ENCODE measurements at regions of chr5 and their contacts with region 1.

Region 1: DNA sequence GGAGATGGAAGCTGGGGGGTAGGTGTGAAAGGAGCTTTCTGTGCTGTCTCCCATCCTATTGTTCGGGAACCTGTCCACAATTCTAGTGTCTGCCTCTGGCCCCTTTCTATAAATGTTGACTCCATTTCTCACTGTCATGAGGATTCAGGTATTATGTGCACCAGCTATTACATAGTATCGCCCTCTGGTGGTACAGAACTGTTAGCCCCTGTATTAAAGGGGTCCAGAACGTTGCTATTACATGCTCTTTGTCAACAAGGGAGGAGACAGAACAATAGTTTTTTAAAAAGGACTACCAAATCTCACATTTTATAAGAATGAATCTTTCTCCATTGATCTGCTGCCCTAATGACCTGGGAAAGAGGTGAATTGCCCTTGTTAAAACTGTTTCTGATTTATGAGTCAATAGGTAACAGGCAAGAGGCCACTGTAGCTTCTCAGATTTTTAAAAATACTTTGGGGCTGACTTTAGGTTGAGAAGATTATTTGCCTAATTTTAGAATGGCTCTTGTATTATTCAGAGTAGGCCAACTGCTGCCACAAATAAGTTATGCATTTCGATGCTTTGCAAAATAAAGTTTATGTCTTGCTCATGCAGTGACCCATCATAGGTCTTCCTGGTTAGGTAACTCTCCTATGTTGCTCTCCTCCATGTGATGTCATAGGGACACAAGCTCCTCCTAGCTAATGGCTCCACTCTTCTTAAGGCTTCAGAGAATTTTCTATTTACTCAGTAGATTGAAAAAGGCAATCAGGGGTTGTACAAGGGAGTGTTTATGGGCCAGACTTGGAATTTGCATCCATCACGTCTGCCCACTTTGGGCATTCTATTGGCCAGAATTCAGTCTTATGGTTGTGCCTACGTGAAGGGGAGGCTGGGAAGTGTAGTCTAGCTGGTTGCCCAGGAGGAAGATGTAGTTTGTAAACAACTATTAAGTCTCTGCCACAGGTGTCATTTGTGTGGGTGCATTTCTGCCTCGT is 20.8 kb downstream of the DCANP1 start:
- DNase-seq: peak; percentile 67
- CTCF ChIP-seq: peak; percentile 83

Region 2: GRCh38 chr5:135214897-135215616 is 211.3 kb before region 1 on chr5:
- CTCF ChIA-PET with region 1: no interaction called
- POLR2A ChIA-PET with region 1: no interaction called
- DNase-seq: no peak
- CTCF ChIP-seq: no peak

Region 3: DNA sequence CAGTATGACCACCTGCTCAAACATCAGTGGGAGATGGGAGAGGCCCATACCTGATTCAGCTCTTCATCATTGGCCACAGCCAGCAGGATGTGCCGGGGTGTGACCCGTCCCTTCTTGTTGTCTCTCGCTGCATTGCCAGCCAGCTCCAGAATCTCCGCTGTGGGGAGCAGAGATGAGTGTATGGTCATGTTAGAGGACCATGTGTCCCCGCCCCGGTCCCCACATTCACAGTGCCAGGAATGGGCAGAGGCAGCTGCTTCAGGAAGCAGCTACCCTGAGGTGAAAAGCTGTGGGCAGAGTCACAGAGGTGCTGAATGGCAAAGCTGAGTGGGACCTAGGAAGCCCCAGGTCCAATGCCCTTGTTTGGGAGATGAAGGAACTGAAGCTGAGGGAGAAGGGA is 56.4 kb before region 1 on chr5:
- CTCF ChIA-PET with region 1: interaction called, 10 read pairs
- POLR2A ChIA-PET with region 1: no interaction called
- DNase-seq: no peak
- CTCF ChIP-seq: no peak

Region 4: DNA sequence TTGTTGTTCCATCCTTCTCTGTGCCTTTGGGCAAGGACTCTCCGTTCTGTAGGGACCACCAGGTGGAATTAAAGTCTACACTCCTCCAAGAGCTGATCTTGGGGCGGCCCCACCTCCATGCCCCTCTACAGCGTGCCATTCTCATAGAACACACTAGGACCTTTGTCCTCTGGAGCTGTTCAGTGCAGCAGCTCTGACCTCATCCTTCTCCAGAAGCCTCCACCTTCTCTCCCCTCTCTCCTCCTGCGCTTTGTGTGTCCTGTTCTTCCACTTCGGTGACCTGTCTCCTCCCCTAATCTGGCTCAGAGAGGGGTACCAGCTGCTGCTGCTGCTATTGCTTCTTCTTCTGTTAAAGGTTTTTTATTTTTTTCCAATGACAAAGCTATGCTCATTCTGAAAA is 25.5 kb before region 1 on chr5:
- CTCF ChIA-PET with region 1: interaction called, 27 read pairs
- POLR2A ChIA-PET with region 1: no interaction called
- DNase-seq: no peak
- CTCF ChIP-seq: no peak

Region 5: DNA sequence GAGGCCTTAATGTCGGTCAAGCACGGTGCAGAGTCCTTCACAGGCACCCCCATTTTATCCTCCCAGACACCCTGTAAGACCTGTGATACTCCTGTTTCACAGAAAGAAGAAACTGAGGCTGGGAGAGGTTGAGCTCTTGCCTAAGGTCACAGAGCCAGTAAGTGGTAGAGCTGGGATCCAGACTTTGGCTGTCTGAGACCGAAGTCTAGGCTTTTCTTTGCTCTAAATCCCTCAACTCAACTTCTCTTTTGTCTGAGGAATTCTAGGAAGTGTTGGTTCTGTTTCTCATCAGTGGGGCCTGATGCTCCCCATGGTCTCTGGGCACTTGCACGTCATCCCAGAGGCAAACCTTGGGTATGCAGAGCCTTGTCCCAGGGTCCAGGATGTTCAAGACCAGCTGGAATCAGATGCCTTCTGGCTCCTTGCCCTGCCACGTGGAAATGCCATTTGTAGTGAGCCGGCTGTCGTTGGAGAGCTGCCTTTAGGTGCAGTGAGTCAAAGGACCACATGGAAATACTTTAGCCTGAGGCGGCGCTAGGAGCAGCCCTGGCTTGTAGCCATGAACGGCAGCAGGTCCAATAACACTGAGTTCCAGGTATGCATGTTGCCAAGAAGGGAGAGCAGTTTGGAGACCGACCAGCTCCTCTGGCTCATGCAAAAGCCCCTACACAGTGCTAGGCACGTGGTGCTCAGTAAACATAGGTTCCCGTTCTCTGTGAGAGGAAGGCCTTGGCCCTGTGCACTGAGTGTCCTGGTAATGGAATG is 11.6 kb after region 1 on chr5:
- CTCF ChIA-PET with region 1: interaction called, 85 read pairs
- POLR2A ChIA-PET with region 1: no interaction called
- DNase-seq: no peak
- CTCF ChIP-seq: no peak

Region 6: DNA sequence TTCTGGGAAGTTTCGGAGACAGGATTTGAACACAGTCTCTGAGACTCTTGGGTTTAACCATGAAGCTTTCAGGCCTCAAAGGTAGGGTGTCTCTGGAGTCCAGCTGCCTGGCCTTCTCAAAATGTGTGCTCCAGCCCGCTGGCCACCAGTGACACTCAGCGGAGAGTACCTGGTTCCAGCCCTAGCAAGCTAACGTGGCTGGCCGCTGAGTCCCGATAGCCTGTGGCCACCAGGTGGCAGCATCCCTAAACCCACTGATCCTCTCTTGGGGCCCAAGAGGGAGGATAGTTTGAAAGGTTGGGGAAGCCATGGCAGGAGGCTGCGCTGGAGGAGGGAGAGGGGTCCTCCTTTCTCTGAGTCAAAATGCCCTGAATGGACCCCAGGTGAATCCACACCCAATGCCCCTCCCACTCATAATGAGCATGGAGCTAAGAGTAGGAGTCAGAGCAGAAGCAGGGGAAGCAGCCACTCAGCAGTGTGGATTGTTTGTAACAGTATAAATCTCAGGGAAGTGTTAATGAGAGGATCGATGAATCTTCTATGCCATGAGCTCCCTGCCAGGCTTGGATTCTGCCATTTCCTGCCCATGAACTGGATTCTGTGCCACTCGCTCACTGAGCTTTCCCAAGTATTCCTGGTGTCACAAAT is 31.2 kb after region 1 on chr5:
- CTCF ChIA-PET with region 1: interaction called, 20 read pairs
- POLR2A ChIA-PET with region 1: no interaction called
- DNase-seq: peak; percentile 80
- CTCF ChIP-seq: peak; percentile 94

Region 7: DNA sequence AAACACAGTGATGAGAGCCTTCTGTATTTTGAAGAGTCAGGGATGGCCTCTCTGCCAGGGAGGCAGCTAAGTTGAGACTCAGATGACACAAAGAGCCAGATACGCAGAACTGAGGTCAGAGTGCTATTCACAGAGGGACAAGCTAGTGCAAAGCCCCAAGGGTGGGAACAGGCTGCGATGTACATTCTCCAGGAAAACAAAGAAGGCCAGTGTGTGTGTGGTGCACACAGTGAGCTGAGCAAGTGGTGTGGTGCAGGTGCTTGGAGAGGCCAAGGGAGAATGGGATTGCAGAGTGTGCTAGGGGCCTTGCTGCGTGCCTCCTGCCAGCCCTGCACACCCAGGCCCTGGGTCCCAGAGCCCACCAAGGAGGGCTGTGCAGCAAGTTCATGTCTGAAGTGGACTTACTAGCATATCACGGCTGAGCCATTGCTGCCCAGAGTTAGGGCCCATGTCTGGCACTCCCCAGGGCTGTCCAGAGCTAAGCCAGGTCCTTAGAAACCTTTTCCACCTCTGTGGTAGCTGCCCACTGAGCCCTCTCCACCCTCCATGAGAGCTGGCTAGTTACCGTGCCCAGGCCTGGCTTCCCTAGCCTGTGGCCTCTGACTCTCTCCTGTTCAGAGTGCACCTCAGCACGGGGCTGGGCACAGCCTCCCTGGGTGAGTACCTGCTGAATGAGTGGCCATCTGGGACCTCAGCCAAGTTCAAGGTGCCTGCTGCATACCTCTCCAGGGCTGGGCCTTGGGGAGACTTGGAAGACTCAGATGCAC is 417.4 kb after region 1 on chr5:
- CTCF ChIA-PET with region 1: no interaction called
- POLR2A ChIA-PET with region 1: no interaction called
- DNase-seq: no peak
- CTCF ChIP-seq: no peak

Region 8: GRCh38 chr5:135921388-135921787 is 495.0 kb after region 1 on chr5:
- CTCF ChIA-PET with region 1: no interaction called
- POLR2A ChIA-PET with region 1: no interaction called
- DNase-seq: no peak
- CTCF ChIP-seq: no peak

Measured in GM10248 (cell line).